Common myeloid progenitor, CD34-positive (primary cell): ENCODE measurements at regions of chr12 and their contacts with region 1.

Region 1: DNA sequence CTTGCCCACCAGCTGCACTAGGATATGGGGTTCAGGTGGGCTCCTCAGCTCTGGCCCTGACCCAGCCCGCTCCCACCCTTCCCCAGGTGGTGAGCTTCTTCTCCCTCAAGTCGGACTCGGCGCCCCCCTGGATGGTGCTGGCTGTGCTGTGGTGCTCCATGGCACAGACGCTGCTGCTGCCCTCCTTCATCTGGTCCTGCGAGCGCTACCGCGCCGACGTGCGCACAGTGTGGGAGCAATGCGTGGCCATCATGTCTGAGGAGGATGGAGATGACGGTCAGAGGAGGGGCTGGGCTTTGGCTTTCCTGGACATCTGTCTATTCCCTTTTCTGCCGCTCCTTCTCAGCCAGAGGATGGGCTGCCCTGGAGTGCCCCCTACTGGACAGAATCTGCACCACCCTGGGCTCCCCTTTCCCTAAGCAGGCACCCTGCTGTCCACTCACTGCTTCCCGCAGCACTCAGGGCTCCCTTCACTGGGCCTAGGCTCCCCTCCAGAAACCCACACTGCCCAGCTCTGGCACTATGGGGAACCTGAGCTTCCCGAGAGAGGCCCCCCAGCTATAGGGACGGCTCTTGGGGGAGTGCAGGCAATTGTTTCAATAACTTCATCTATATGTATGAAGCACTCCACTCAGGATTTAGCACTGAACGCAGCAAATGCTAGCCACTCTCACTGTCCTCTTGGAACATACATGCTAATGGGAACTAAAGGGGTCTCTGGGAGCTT is 2.6 kb upstream of the P3H3 start:
- DNase-seq: peak; percentile 66 to 80 (median 73)
- H3K4me3 ChIP-seq: peak overlapping the region in 1 of 7 experiments; percentile 32
- H3K27ac ChIP-seq: no peak overlapping the region
- H3K4me1 ChIP-seq: peaks cover 0 to 44% (median 39%) of the 10 kb centered on the region in 4 experiments
- H3K27me3 ChIP-seq: peaks cover 0 to 7% (median 0%) of the 10 kb centered on the region in 5 experiments

Region 2: GRCh38 chr12:6735448-6736191 is 89.9 kb before region 1 on chr12:
- CTCF ChIA-PET with region 1: interaction called, 64 read pairs
- POLR2A ChIA-PET with region 1: no interaction called
- DNase-seq: peak; percentile 59 to 74 (median 72)
- H3K4me3 ChIP-seq: no peak overlapping the region
- H3K27ac ChIP-seq: peak overlapping the region in 1 of 2 experiments; percentile 43
- H3K4me1 ChIP-seq: peaks cover 0 to 5% (median 2%) of the 10 kb centered on the region in 4 experiments
- H3K27me3 ChIP-seq: no peaks in the 10 kb centered on the region

Region 3: GRCh38 chr12:6778574-6779550 is 46.7 kb before region 1 on chr12:
- CTCF ChIA-PET with region 1: interaction called, 25 read pairs
- POLR2A ChIA-PET with region 1: no interaction called
- DNase-seq: peak; percentile 86 to 93 (median 90)
- H3K4me3 ChIP-seq: peak overlapping the region; percentile 5 to 70 (median 62)
- H3K27ac ChIP-seq: no peak overlapping the region
- H3K4me1 ChIP-seq: peaks cover 0 to 28% (median 19%) of the 10 kb centered on the region in 4 experiments
- H3K27me3 ChIP-seq: peaks cover 0 to 13% (median 0%) of the 10 kb centered on the region in 5 experiments

Region 4: DNA sequence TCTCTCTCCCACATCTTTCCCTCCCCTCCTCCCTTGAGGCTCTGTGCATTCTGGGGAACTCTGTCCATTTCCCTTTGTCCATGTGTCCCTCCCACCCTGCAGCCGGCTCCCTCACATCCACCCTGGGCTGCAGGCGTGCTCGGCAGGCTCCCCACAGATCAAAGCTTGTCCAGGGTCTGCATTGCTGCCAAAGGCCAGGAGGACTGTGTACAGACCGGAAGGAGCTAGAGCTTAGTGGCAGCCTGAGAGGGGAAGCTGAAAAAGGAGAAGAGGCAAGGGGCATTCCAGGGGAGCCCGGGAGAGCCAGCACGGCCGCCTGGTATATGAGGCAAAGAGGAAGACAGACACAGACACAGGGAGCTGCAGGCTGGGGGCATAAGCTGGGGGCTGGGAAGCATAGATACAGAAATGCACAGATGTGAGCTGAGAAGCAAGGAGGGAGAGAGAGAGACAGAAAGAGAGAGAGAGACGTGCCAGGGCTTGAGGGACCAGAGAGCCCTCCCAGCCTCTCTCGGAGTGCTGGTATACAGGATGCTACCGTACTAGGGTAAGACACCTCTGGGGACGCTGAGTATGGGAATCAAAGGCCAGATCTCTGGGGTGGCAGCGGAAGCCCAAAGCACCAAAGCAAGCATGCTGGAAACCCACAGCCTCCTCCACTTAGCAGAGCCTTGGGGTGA is 32.9 kb before region 1 on chr12:
- CTCF ChIA-PET with region 1: interaction called, 52 read pairs
- POLR2A ChIA-PET with region 1: interaction called, 10 read pairs
- DNase-seq: peak; percentile 36 to 86 (median 83)
- H3K4me3 ChIP-seq: peak overlapping the region in 5 of 7 experiments; percentile 6 to 46 (median 29)
- H3K27ac ChIP-seq: no peak overlapping the region
- H3K4me1 ChIP-seq: peaks cover 0 to 42% (median 35%) of the 10 kb centered on the region in 4 experiments
- H3K27me3 ChIP-seq: no peaks in the 10 kb centered on the region

Region 5: DNA sequence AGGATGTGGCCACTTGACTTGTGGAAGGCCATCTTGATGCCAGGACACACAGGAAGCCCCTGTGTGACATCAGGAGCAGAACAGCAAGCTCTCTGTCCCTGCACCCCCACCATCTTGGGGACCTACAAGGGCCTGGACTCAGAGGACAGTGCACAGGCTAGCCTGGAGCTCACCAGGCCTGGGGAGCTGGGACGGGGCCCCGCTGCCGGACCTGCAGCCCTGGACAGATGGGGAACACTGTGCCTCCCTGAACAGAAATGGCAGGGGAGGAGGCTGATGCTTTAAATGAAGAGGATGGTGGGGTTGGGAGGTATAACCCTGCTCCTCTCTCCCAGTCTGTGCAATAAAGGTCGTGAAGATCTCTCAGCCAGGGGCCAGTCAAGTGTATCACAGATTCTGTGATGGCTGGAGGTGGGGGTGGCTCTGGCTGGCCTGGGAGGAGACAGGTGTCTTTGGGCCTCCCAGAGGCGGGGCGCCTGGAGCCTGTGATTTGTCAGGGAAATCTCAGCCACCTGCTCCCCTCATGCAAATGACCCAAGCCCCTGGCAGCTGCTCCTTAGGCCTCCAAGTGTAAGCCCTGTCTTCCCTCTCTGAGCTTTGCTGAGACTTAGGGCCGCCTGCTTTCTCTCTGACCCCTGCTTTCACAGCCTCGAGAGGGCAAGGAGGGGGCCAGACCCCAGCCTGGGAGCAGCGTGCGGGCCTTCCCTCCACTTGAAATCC is 14.1 kb after region 1 on chr12:
- CTCF ChIA-PET with region 1: interaction called, 23 read pairs
- POLR2A ChIA-PET with region 1: no interaction called
- DNase-seq: no peak
- H3K4me3 ChIP-seq: no peak overlapping the region
- H3K27ac ChIP-seq: no peak overlapping the region
- H3K4me1 ChIP-seq: peaks cover 0 to 2% (median 0%) of the 10 kb centered on the region in 4 experiments
- H3K27me3 ChIP-seq: no peaks in the 10 kb centered on the region